Panc1 (cell line): ENCODE measurements at regions of chr3 and their contacts with region 1.

Region 1: GRCh38 chr3:167032261-167032876 is 347.7 kb downstream of the ZBBX start:
- DNase-seq: peak; percentile 12
- ATAC-seq: no peak
- H3K4me3 ChIP-seq: no peak overlapping the region
- H3K27ac ChIP-seq: no peak overlapping the region
- H3K4me1 ChIP-seq: no peaks in the 10 kb centered on the region
- H3K27me3 ChIP-seq: no peaks in the 10 kb centered on the region
- CTCF ChIP-seq: peak; percentile 44; the same call in 1 of the 2 replicates

Region 2: DNA sequence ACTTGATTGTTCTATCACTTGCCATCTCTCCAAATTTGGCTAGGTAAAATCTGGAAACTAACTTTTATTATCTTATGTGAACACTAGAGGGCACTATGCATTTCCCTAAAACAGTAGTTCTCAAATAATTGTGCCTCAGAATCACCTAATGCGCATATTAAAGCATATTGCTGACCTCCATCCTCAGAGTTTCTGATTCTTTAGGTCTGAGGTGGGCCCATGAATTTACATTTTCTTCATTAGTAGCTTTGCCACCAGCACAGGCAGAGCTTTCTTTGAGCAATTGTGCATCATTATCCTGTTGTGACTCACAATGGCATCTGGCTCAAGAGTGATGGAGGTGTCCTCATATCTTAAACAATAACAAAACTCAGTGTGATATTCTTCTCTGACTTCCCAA is 1177.7 kb before region 1 on chr3:
- CTCF ChIA-PET with region 1: no interaction called
- POLR2A ChIA-PET with region 1: no interaction called
- in situ Hi-C with region 1: no loop called
- intact Hi-C with region 1: loop called (anchors 5 kb)
- DNase-seq: no peak
- ATAC-seq: no peak
- H3K4me3 ChIP-seq: no peak overlapping the region
- H3K27ac ChIP-seq: no peak overlapping the region
- H3K4me1 ChIP-seq: no peaks in the 10 kb centered on the region
- H3K27me3 ChIP-seq: no peaks in the 10 kb centered on the region
- CTCF ChIP-seq: peak; percentile 73

Region 3: DNA sequence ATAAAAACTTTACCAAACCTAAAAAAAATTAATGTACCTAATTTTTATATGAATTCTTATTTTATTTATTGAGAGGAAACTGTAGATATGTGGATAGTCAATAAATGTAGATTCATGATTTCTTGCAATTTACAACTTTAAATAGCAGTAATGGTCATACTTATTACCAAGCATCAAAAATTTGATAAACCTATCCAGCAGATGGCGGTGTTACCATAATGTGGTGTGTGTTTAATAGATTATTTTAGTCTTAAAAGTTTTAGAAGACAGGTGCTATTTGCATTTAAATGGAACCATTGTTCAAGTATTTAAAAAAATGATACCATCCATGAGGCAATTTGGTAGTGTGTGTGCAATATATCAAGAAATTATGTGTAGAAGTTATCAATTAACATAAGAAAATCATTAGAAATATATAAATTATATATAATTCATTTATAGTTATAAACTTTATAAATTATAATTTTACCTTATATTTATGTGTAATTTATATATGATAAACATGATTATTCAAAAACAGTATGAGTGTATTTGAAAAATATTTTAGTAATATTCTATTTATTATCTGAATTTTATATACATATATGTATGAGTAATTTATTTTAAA is 1019.2 kb before region 1 on chr3:
- CTCF ChIA-PET with region 1: no interaction called
- POLR2A ChIA-PET with region 1: no interaction called
- in situ Hi-C with region 1: no loop called
- intact Hi-C with region 1: loop called (anchors 5 kb)
- DNase-seq: peak; percentile 10
- ATAC-seq: no peak
- H3K4me3 ChIP-seq: no peak overlapping the region
- H3K27ac ChIP-seq: no peak overlapping the region
- H3K4me1 ChIP-seq: no peaks in the 10 kb centered on the region
- H3K27me3 ChIP-seq: no peaks in the 10 kb centered on the region
- CTCF ChIP-seq: peak; percentile 35; the same call in 1 of the 2 replicates

Region 4: GRCh38 chr3:167066977-167067786 is 34.8 kb after region 1 on chr3:
- CTCF ChIA-PET with region 1: no interaction called
- POLR2A ChIA-PET with region 1: no interaction called
- in situ Hi-C with region 1: no loop called
- intact Hi-C with region 1: no loop called
- DNase-seq: no peak
- ATAC-seq: no peak
- H3K4me3 ChIP-seq: no peak overlapping the region
- H3K27ac ChIP-seq: no peak overlapping the region
- H3K4me1 ChIP-seq: no peaks in the 10 kb centered on the region
- H3K27me3 ChIP-seq: no peaks in the 10 kb centered on the region
- CTCF ChIP-seq: no peak

Region 5: DNA sequence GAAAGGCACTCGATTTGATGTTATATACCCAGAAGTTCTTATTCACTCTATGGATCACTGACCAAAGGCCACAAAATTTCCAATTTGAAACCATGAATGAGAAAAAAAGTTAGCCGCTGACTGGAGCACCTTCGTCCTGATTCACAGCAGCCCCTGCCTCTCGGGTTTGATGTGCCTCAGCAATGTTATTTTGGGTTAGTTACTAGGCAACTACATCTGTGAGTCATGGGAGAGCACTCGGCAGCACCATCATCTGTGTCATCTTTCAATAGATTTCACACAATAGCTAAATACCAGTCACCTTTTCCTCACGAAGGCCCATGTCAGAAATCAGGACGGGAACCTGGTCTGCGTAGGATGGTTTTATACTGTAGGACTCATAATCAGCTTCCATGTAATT is 78.5 kb after region 1 on chr3:
- CTCF ChIA-PET with region 1: no interaction called
- POLR2A ChIA-PET with region 1: no interaction called
- in situ Hi-C with region 1: no loop called
- intact Hi-C with region 1: no loop called
- DNase-seq: no peak
- ATAC-seq: no peak
- H3K4me3 ChIP-seq: no peak overlapping the region
- H3K27ac ChIP-seq: no peak overlapping the region
- H3K4me1 ChIP-seq: no peaks in the 10 kb centered on the region
- H3K27me3 ChIP-seq: no peaks in the 10 kb centered on the region
- CTCF ChIP-seq: no peak

Region 6: GRCh38 chr3:167346171-167346570 is 313.8 kb after region 1 on chr3:
- CTCF ChIA-PET with region 1: no interaction called
- POLR2A ChIA-PET with region 1: no interaction called
- in situ Hi-C with region 1: no loop called
- intact Hi-C with region 1: loop called (anchors 10 kb)
- DNase-seq: no peak
- ATAC-seq: no peak
- H3K4me3 ChIP-seq: no peak overlapping the region
- H3K27ac ChIP-seq: no peak overlapping the region
- H3K4me1 ChIP-seq: no peaks in the 10 kb centered on the region
- H3K27me3 ChIP-seq: no peaks in the 10 kb centered on the region
- CTCF ChIP-seq: no peak